CD4-positive, alpha-beta memory T cell (primary cell): ENCODE measurements at regions of chr5 and their contacts with region 1.

Region 1: GRCh38 chr5:100903039-100903887 is at the start of gene ST8SIA4:
- DNase-seq: peak; percentile 86 to 97 (median 89)
- H3K4me3 ChIP-seq: peak within 1 kb of the TSS; percentile 88 to 89
- H3K4me3 Mint-ChIP-seq: peak within 1 kb of the TSS; percentile 89 to 100 (median 96)
- H3K27ac ChIP-seq: peak within 1 kb of the TSS; percentile 91
- H3K27ac Mint-ChIP-seq: peak within 1 kb of the TSS; percentile 97 to 98 (median 98)
- H3K4me1 ChIP-seq: peaks cover 34% of the 10 kb centered on the region
- H3K4me1 Mint-ChIP-seq: peaks cover 26 to 70% (median 42%) of the 10 kb centered on the region in 4 donors
- H3K27me3 ChIP-seq: no peaks in the 10 kb centered on the region
- H3K27me3 Mint-ChIP-seq: no peaks in the 10 kb centered on the region
- total RNA-seq, gene ST8SIA4: 27.7 to 28.7 TPM

Region 2: DNA sequence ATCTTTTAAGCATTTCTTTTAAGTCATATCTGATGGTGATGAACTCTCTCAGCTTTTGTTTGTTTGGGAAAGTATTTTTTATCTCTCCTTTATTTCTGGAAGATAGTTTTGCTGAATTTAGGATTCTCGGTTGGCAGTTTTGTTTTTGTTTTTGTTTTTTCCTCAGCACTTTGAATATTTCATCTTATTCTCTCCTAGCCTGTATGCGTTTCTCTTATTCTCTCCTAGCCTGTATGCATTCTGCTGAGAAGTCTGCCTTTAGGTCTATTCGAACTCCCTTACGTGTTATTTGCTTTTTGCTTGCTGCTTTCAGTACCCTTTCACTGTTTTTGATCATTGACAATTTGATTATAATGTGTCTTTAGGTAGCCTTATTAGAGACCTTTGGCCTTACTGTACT is 1155.9 kb before region 1 on chr5:
- CTCF ChIA-PET with region 1: no interaction called
- POLR2A ChIA-PET with region 1: no interaction called
- intact Hi-C with region 1: no loop called
- DNase-seq: no peak
- H3K4me3 ChIP-seq: no peak overlapping the region
- H3K4me3 Mint-ChIP-seq: no peak overlapping the region
- H3K27ac ChIP-seq: no peak overlapping the region
- H3K27ac Mint-ChIP-seq: peak overlapping the region in 1 of 7 donors; percentile 40
- H3K4me1 ChIP-seq: no peaks in the 10 kb centered on the region
- H3K4me1 Mint-ChIP-seq: no peaks in the 10 kb centered on the region
- H3K27me3 ChIP-seq: no peaks in the 10 kb centered on the region
- H3K27me3 Mint-ChIP-seq: peaks cover 0 to 2% of the 10 kb centered on the region in 2 donors

Region 3: GRCh38 chr5:100535060-100536005 is 367.9 kb before region 1 on chr5 and contains the start of gene FAM174A:
- CTCF ChIA-PET with region 1: interaction called, 6 read pairs
- POLR2A ChIA-PET with region 1: interaction called, 17 read pairs
- intact Hi-C with region 1: loop called (anchors 1 kb)
- DNase-seq: peak; percentile 92 to 96 (median 95)
- H3K4me3 ChIP-seq: peak within 1 kb of the TSS; percentile 68 to 81
- H3K4me3 Mint-ChIP-seq: peak within 1 kb of the TSS; percentile 93 to 100 (median 97)
- H3K27ac ChIP-seq: peak within 1 kb of the TSS; percentile 89
- H3K27ac Mint-ChIP-seq: peak within 1 kb of the TSS; percentile 92 to 99 (median 98)
- H3K4me1 ChIP-seq: peaks cover 24% of the 10 kb centered on the region
- H3K4me1 Mint-ChIP-seq: peaks cover 23 to 33% (median 26%) of the 10 kb centered on the region in 4 donors
- H3K27me3 ChIP-seq: no peaks in the 10 kb centered on the region
- H3K27me3 Mint-ChIP-seq: peaks cover 0 to under 1% of the 10 kb centered on the region in 2 donors
- total RNA-seq, gene FAM174A: 5.1 to 6.7 TPM

Region 4: DNA sequence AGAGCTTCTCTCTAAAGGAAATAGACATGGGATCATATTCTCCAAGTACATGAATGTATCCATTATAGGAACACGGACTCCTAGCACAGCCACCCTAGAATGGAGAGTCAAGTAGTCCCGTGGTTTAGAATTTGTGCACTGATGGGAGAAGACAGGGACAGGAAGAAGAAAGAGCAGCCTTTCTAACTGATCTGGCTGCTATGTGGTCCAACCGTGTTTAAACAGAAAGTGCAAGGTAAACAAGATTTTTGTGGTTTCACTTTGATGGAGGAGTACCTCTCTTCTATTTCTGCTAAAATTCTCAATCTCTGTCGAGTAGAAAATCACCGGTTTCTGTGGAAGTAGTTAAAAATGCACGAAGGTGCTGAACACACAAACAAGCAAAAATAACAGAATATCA is 171.5 kb before region 1 on chr5:
- CTCF ChIA-PET with region 1: interaction called, 7 read pairs
- POLR2A ChIA-PET with region 1: interaction called, 10 read pairs
- intact Hi-C with region 1: loop called (anchors 1 kb)
- DNase-seq: peak; percentile 38 to 66 (median 52)
- H3K4me3 ChIP-seq: peak overlapping the region in 1 of 2 donors; percentile 2
- H3K4me3 Mint-ChIP-seq: peak overlapping the region; percentile 76 to 91 (median 81)
- H3K27ac ChIP-seq: peak overlapping the region; percentile 7
- H3K27ac Mint-ChIP-seq: peak overlapping the region; percentile 70 to 93 (median 89)
- H3K4me1 ChIP-seq: peaks cover 13% of the 10 kb centered on the region
- H3K4me1 Mint-ChIP-seq: peaks cover 5 to 10% (median 8%) of the 10 kb centered on the region in 4 donors
- H3K27me3 ChIP-seq: no peaks in the 10 kb centered on the region
- H3K27me3 Mint-ChIP-seq: no peaks in the 10 kb centered on the region

Region 5: GRCh38 chr5:100840384-100840783 is 62.9 kb before region 1 on chr5:
- CTCF ChIA-PET with region 1: interaction called, 39 read pairs
- POLR2A ChIA-PET with region 1: interaction called, 99 read pairs
- intact Hi-C with region 1: loop called (anchors 1 kb)
- DNase-seq: peak in 1 of 5 donors; percentile 59
- H3K4me3 ChIP-seq: no peak overlapping the region
- H3K4me3 Mint-ChIP-seq: peak overlapping the region in 5 of 8 donors; percentile 79 to 91 (median 84)
- H3K27ac ChIP-seq: no peak overlapping the region
- H3K27ac Mint-ChIP-seq: peak overlapping the region in 6 of 7 donors; percentile 33 to 90 (median 74)
- H3K4me1 ChIP-seq: peaks cover 65% of the 10 kb centered on the region
- H3K4me1 Mint-ChIP-seq: peaks cover 49 to 74% (median 56%) of the 10 kb centered on the region in 4 donors
- H3K27me3 ChIP-seq: no peaks in the 10 kb centered on the region
- H3K27me3 Mint-ChIP-seq: no peaks in the 10 kb centered on the region

Region 6: DNA sequence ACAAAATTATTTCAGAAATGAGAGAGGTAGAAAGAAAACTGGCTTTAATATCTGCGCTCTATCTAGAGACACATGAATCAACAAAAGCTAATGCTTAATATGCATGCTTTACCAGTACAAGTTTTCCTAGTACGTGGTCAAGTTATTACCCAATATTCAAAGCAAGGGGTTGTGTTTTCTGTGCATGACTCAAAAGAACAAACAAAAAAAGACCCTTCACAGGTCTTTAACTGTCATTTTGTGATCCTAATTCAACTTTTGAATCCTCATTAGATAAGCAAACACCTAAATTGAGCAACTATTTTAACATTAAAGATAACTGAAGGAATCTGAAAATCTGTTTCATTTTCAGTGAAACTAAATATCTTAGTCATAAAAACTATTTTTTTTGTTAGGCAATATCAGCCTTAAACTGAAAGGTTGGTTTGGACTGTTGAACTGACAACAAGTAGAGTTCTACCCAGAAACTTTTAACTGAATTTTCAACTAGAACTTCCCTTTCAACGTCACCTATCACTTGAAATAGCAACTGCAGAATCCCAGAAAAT is 12.7 kb before region 1 on chr5:
- CTCF ChIA-PET with region 1: interaction called, 57 read pairs
- POLR2A ChIA-PET with region 1: interaction called, 208 read pairs
- intact Hi-C with region 1: loop called (anchors 1 kb)
- DNase-seq: no peak
- H3K4me3 ChIP-seq: peak overlapping the region in 1 of 2 donors; percentile 30
- H3K4me3 Mint-ChIP-seq: peak overlapping the region; percentile 66 to 83 (median 79)
- H3K27ac ChIP-seq: peak overlapping the region; percentile 67
- H3K27ac Mint-ChIP-seq: peak overlapping the region; percentile 84 to 92 (median 91)
- H3K4me1 ChIP-seq: peaks cover 74% of the 10 kb centered on the region
- H3K4me1 Mint-ChIP-seq: peaks cover 46 to 81% (median 53%) of the 10 kb centered on the region in 4 donors
- H3K27me3 ChIP-seq: no peaks in the 10 kb centered on the region
- H3K27me3 Mint-ChIP-seq: no peaks in the 10 kb centered on the region